Ascending aorta (tissue), 2 donors: ENCODE measurements at regions of chr15 and their contacts with region 1.

Region 1: DNA sequence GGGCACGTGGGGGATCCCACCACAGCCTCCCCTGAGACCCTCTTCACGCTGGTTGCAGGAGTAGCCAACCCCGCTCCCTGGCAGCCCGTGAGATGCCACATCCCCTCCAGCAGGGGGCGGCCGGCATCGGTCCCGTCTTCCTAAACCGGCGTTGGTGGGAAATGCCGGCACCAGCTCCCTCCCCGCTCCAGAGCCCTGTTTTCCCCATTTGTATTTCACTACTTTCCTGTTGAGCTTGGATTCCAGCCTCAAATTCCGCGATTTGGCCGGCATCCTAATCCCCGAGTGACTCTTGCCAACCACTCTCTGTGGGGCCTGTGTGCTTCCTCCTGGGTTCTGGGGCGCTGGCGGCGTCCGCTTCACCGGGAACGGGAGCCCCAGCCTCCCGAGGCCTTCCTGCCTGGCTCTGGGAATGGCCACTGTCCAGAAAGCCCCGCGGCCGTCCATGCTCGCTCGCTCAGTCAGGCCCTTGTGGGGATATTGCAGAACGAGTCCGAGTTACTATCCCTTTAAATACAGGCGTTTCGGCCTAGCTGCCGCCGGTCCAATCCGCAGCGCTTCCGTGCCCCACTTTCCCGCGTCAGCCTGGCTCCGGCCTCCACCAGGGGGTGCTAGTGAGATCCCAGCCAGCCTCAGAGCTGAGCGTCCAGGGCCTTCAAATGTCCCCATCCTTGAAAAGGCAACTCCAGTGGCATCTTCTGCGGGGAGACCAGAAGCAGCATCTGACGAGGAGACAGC is 8.1 kb upstream of the ADAMTS17 start:
- DNase-seq: peak; percentile 61 to 98
- H3K4me3 ChIP-seq: peak overlapping the region; percentile 73 to 89
- H3K27ac ChIP-seq: peak overlapping the region; percentile 97 to 99
- H3K4me1 ChIP-seq: peaks cover 7 to 9% of the 10 kb centered on the region in 2 donors
- H3K27me3 ChIP-seq: no peaks in the 10 kb centered on the region
- CTCF ChIP-seq: peak; percentile 80 to 95 (median 84)

Region 2: GRCh38 chr15:99250494-99251435 is 1099.1 kb before region 1 on chr15:
- intact Hi-C with region 1: loop called (anchors 10 kb)
- DNase-seq: peak; percentile 92 to 99
- H3K4me3 ChIP-seq: peak overlapping the region; percentile 63 to 89
- H3K27ac ChIP-seq: peak overlapping the region; percentile 89 to 92
- H3K4me1 ChIP-seq: peaks cover 8 to 14% of the 10 kb centered on the region in 2 donors
- H3K27me3 ChIP-seq: no peaks in the 10 kb centered on the region
- CTCF ChIP-seq: no peak

Region 3: DNA sequence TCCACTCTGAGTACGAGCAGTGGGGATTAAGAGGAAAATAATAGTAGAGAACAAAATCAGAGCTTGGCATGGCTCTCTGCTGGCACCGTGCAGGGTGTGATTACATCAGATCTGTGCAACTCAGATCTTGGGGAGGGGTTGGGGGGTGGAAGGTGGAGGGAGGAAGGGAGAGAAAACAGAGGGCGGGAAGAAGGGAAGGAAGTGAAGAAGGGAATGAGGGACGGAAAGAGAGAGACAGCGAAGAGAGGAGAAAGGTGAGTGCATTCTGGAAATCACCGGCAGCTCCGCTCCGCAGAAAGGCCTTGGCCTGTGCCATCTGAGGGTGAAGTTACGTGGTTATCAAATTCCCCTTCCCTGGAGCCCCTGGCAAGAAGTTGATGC is 22.9 kb after region 1 on chr15:
- intact Hi-C with region 1: loop called (anchors 1 kb)
- DNase-seq: no peak
- H3K4me3 ChIP-seq: peak overlapping the region; percentile 63 to 68
- H3K27ac ChIP-seq: peak overlapping the region; percentile 35 to 65
- H3K4me1 ChIP-seq: no peaks in the 10 kb centered on the region
- H3K27me3 ChIP-seq: no peaks in the 10 kb centered on the region
- CTCF ChIP-seq: no peak

Region 4: DNA sequence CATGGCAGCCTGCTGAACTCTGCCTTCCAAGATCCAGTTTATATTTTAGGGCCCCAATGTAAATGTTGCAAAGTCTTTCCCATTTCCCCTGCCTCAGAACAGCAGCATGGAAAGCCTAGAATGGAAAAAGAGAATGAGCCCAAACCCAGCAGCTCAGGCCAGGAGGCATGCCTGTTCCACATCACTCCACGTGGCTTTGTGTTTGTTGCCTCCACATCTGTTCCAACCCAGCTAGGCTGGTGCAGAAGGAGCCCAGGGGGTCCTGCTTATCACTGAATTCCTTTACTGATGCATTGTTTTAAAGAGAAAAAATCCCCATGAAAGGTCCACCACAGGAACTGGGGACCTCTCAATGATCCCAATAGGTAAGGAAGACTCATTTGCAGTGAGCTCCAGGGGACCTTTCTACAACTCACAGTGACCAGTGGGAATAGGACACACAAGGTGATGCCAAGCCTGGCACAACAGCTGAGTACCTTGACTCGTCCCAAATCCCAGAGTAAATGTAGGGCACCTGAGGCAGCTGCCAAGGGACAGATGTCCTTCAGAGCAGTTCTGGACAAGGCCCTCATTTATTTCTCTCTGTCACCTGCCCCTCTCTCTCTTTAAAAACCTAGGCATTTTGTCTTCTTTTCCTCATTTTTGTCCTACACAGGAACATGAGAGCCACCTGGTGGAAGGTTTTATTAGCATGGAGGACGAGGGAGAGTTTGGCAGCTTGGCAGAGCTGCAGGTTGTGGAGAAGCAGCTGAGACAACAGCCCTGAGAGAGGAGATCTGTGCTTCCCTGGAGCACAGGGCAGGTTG is 33.6 kb after region 1 on chr15:
- intact Hi-C with region 1: loop called (anchors 1 kb)
- DNase-seq: no peak
- H3K4me3 ChIP-seq: no peak overlapping the region
- H3K27ac ChIP-seq: no peak overlapping the region
- H3K4me1 ChIP-seq: no peaks in the 10 kb centered on the region
- H3K27me3 ChIP-seq: no peaks in the 10 kb centered on the region
- CTCF ChIP-seq: peak in 2 of 3 experiments; percentile 4 to 39

Region 5: GRCh38 chr15:100572362-100572983 is 222.6 kb after region 1 on chr15:
- intact Hi-C with region 1: loop called (anchors 1 kb)
- DNase-seq: no peak
- H3K4me3 ChIP-seq: no peak overlapping the region
- H3K27ac ChIP-seq: no peak overlapping the region
- H3K4me1 ChIP-seq: no peaks in the 10 kb centered on the region
- H3K27me3 ChIP-seq: no peaks in the 10 kb centered on the region
- CTCF ChIP-seq: peak; percentile 36 to 52 (median 49)

Region 6: DNA sequence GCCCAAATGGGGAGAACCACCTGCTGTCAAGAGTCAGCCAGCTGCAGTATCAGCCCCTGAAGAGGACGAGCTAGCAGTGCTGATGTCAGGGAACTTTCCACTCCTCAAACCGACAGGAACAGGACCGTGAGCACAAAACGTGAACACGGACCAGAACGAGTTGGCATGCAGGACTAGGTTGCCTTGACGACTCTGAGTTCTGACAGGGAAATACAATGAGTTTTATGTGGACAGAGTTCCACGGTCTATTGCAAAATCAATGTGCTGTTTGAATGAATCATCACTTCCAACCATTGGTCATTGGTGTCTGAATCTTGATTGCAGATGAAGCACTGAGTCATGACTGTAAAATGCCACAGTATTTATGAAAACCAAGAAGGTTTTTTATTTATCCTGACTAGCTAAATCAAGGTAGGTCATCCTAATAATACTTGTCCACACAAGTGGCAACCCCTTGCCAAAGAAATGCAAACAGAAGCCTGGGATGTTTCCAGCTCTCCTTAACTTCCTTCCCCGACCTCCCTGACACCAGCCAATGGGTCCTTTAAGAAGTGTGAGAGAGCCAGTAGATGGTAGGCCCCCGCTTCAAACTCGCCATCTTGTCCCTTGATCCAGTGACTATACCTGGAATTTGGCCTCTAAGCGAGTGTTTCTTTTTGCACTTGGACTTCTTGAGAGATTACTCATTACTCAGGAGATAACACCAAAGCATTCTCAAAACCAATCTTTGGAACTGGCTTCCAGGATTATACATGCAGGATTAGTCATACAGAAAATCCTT is 372.1 kb after region 1 on chr15:
- intact Hi-C with region 1: loop called (anchors 10 kb)
- DNase-seq: peak; percentile 66 to 92
- H3K4me3 ChIP-seq: peak overlapping the region in 1 of 2 donors; percentile 25
- H3K27ac ChIP-seq: peak overlapping the region; percentile 70 to 84
- H3K4me1 ChIP-seq: peaks cover 3 to 13% of the 10 kb centered on the region in 2 donors
- H3K27me3 ChIP-seq: no peaks in the 10 kb centered on the region
- CTCF ChIP-seq: no peak